ENCODE measurements at regions of chr10 and their contacts with region 1.

Region 1: DNA sequence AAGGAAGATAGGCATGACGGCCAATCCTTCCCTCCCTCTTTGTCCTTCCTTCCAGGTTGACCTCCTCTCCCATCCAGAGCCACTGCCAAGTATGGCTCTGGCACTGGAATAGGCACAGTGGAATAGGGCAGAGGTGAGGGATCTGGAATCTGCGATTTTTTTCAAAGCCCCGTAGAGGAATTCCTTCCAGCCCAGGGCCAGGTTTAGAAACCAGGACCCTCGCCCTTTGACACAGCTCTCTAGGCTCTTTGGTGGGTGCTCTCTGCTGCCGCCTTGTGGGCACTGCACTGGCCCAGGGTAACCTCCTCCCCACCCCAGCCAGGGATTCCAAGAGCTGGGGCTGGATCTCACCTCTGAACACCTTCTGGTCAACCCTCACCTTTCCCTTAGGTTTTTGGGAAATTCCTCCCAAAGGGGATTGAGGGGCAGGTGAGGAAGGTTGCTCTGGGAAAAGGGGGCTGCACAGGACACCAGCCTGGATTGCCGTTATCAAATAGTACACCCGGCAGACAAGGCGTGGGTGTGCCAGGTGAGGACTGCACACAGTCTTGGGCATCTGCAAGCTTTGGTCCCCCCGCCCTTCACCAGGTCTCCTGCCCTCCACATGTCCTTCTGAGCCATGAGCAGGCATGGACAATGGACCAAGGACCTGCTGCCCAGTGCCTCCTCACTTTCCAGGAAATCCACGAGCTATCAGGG is 22.8 kb downstream of the C10orf105 start:
- DNase-seq: peak; percentile 80
- H3K4me3 ChIP-seq: no peak overlapping the region
- H3K27ac ChIP-seq: no peak overlapping the region
- H3K4me1 ChIP-seq: peaks cover 4 to 6% (median 5%) of the 10 kb centered on the region in 4 donors
- H3K27me3 ChIP-seq: no peaks in the 10 kb centered on the region
- CTCF ChIP-seq: peak; percentile 86 to 90 (median 88)
- EP300 ChIP-seq: no peak
- POLR2A ChIP-seq: no peak

Region 2: GRCh38 chr10:70956029-70956759 is 740.6 kb before region 1 on chr10:
- in situ Hi-C with region 1: no loop called
- intact Hi-C with region 1: no loop called
- DNase-seq: no peak
- H3K4me3 ChIP-seq: no peak overlapping the region
- H3K27ac ChIP-seq: no peak overlapping the region
- H3K4me1 ChIP-seq: no peaks in the 10 kb centered on the region
- H3K27me3 ChIP-seq: no peaks in the 10 kb centered on the region
- CTCF ChIP-seq: no peak
- EP300 ChIP-seq: no peak
- POLR2A ChIP-seq: no peak

Region 3: DNA sequence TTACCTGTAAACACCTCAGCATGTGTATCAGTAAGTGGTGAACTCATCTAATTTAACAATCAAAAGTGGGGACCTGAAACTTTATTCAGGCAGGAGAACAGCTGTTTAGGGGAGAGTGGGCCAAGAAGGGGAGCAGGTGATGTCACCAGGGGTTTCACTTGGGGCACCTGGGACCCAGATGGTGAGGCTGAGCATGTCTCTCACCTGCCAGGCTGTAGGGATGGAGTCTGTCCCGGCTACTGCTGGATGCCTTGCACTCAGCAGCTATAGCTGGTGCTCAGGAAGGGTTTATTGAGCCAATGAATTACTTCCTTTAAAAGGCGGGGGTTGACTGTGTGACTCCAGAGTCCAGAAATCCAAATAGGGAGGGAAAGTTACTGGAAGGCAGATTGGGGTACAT is 277.0 kb before region 1 on chr10:
- in situ Hi-C with region 1: no loop called
- intact Hi-C with region 1: no loop called
- DNase-seq: no peak
- H3K4me3 ChIP-seq: no peak overlapping the region
- H3K27ac ChIP-seq: no peak overlapping the region
- H3K4me1 ChIP-seq: no peaks in the 10 kb centered on the region
- H3K27me3 ChIP-seq: peaks cover 4% of the 10 kb centered on the region
- CTCF ChIP-seq: no peak
- EP300 ChIP-seq: no peak
- POLR2A ChIP-seq: no peak

Region 4: DNA sequence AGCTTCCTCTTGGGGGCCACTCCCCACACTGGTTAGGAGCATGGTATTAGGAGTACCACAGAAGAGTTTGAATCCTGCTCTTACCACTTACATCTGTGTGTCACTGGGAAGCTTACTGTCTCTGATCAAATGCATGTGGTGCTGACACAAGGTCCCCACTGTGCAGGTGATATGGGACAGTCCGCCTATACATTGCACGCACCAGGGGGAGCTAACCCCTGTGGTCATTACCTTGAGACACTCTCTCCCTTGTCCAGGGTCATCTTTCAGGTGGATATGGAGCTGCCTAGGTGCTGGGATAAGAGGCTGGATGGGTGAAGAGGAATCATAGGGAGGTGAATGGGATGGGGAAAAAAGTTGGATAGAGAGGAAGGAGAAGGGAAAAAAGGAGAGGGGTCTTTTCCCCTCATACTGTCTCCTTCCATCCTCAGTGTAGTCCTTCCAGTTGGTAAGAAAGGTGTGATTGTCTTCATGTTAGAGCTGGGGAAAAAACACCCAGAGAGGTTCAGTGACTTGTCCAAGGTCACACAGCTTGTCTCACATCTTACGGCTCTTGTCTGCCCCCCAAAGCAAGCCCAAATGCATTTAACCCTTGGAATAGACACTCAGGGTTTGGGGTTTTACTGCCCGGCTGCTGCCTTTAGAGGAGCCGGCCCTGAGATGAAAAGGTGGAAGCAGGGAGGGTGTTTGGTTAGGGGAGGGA is 174.2 kb before region 1 on chr10:
- in situ Hi-C with region 1: no loop called
- intact Hi-C with region 1: no loop called
- DNase-seq: no peak
- H3K4me3 ChIP-seq: no peak overlapping the region
- H3K27ac ChIP-seq: no peak overlapping the region
- H3K4me1 ChIP-seq: peaks cover 0 to 4% (median 0%) of the 10 kb centered on the region in 4 donors
- H3K27me3 ChIP-seq: peaks cover 7% of the 10 kb centered on the region
- CTCF ChIP-seq: no peak
- EP300 ChIP-seq: no peak
- POLR2A ChIP-seq: no peak

Region 5: GRCh38 chr10:71805776-71806703 is 109.3 kb after region 1 on chr10:
- in situ Hi-C with region 1: loop called in 1 of 4 experiments (anchors 25 kb)
- intact Hi-C with region 1: loop called (anchors 10 kb)
- DNase-seq: peak; percentile 64
- H3K4me3 ChIP-seq: no peak overlapping the region
- H3K27ac ChIP-seq: peak overlapping the region in 2 of 4 donors; percentile 1 to 25
- H3K4me1 ChIP-seq: peaks cover 0 to 13% (median 0%) of the 10 kb centered on the region in 4 donors
- H3K27me3 ChIP-seq: no peaks in the 10 kb centered on the region
- CTCF ChIP-seq: no peak
- EP300 ChIP-seq: no peak
- POLR2A ChIP-seq: peak; percentile 14

Measured in transverse colon (tissue), 4 donors.